ENCODE measurements at regions of chr10 and their contacts with region 1.

Region 1: DNA sequence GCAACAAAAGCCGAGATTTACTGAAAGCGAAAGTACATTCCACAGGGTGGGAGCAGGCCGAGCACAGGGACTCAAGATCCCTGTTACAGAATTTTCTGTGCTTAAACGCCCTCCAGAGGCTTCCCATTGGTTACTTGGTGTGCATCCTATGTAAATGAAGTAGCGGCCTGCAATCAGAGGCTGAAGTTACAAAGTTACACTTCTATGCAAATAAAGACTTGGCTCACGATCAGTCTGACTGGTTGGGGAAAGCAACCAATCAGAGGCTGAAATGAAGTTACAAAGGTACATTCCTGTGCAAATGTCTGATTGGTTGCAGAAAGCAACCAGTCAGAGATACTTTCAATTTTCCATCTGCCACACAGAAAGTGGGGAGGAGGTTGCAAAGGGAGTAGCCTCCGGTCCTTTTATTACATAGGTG is 4.1 kb downstream of the ACBD7 start:
- DNase-seq: peak in 1 of 2 experiments; percentile 54
- H3K4me3 ChIP-seq: peak overlapping the region in 1 of 4 experiments; percentile 40; a peak in 1 of 8 replicates
- H3K27ac ChIP-seq: no peak overlapping the region
- H3K4me1 ChIP-seq: peaks cover 0 to 10% (median 5%) of the 10 kb centered on the region in 4 experiments; a peak in 5 of 7 replicates
- H3K27me3 ChIP-seq: no peaks in the 10 kb centered on the region
- CTCF ChIP-seq: no peak
- EP300 ChIP-seq: no peak
- POLR2A ChIP-seq: 0 out of 3 replicates have a peak, but pooled peaks of 1 of the 2 experiments have one; percentile 25
- RAD21 ChIP-seq: no peak

Region 2: GRCh38 chr10:15097011-15097812 is 12.7 kb after region 1 on chr10 and contains the start of gene RPP38:
- CTCF ChIA-PET with region 1: interaction called, 4 read pairs
- POLR2A ChIA-PET with region 1: interaction called, 33 read pairs
- DNase-seq: peak; percentile 75 to 99
- H3K4me3 ChIP-seq: peak within 1 kb of the TSS; percentile 72 to 83 (median 74)
- H3K27ac ChIP-seq: peak within 1 kb of the TSS; percentile 96
- H3K4me1 ChIP-seq: peaks cover 0 to 5% (median 2%) of the 10 kb centered on the region in 4 experiments; a peak in 2 of 7 replicates
- H3K27me3 ChIP-seq: no peaks in the 10 kb centered on the region; a peak in 1 of 7 replicates
- CTCF ChIP-seq: no peak
- EP300 ChIP-seq: no peak
- POLR2A ChIP-seq: peak; percentile 85 to 94
- RAD21 ChIP-seq: no peak
- total RNA-seq, gene RPP38: 21.9 and 23.3 TPM in 2 replicates

Measured in H1 (cell line).